ENCODE measurements at regions of chr6 and their contacts with region 1.

Region 1: GRCh38 chr6:150238336-150238741 is 95.5 kb downstream of the PPP1R14C start:
- DNase-seq: no peak
- H3K4me3 Mint-ChIP-seq: no peak overlapping the region
- H3K27ac Mint-ChIP-seq: no peak overlapping the region
- H3K4me1 Mint-ChIP-seq: peaks cover 15% of the 10 kb centered on the region
- H3K27me3 Mint-ChIP-seq: peaks cover 10% of the 10 kb centered on the region

Region 2: DNA sequence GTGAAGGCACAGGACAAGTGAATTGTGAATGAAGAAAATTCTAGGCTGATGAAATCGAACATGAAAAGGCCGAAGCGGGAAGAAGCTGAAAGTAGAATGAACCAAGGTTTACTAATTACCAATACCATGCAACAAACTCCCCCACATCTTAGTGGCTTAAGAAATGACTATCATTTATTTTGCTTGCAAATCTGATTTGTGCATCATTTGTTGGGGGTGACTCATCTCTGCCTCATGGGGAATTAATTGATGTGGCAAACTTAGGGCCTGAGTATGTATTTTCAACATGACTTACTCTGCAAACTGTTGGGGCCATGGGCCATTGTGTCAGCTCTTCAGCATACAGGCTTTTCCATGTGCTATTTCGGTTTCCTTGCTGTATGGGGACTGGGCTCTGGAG is 68.7 kb before region 1 on chr6:
- intact Hi-C with region 1: loop called (anchors 1 kb)
- DNase-seq: no peak
- H3K4me3 Mint-ChIP-seq: no peak overlapping the region
- H3K27ac Mint-ChIP-seq: peak overlapping the region; percentile 13
- H3K4me1 Mint-ChIP-seq: peaks cover 9% of the 10 kb centered on the region
- H3K27me3 Mint-ChIP-seq: peaks cover 12% of the 10 kb centered on the region

Region 3: GRCh38 chr6:150195996-150196417 is 42.3 kb before region 1 on chr6:
- intact Hi-C with region 1: no loop called
- DNase-seq: no peak
- H3K4me3 Mint-ChIP-seq: no peak overlapping the region
- H3K27ac Mint-ChIP-seq: no peak overlapping the region
- H3K4me1 Mint-ChIP-seq: no peaks in the 10 kb centered on the region
- H3K27me3 Mint-ChIP-seq: peaks cover 11% of the 10 kb centered on the region

Region 4: DNA sequence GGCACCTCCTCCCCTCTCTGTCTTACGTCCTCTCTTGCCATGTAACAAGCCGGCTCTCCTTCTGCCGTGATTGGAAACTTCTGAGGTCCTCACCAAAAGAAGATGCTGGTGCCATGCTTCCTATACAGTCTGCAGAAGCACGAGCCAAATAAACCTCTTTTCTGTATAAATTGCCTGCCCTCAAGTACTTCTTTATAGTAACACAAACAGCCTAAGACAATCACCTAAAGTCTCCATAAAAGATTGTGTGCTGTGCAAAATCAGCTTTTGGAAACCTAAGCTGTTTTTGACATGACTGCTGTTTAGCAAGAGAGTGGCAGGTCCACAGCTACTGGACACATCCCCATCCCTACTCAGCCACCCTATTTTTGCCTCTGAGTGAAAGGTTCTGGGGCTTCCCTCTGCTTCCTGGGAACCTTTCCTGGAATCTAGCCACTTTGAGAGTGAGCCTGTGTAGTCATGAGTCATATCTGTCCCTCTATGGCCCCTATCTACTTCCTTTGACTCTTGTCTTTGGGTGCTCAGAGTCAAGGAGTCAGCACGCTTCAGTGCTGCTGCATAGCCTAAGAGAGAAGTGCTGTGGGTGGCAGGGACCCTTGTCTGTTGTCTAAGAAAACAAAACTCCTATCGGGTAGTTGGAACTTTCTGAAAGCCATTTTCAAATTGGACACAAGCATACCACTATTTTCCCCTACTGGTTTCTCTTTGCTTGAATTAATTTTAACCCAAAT is 14.5 kb after region 1 on chr6:
- intact Hi-C with region 1: loop called (anchors 1 kb)
- DNase-seq: no peak
- H3K4me3 Mint-ChIP-seq: no peak overlapping the region
- H3K27ac Mint-ChIP-seq: no peak overlapping the region
- H3K4me1 Mint-ChIP-seq: peaks cover 31% of the 10 kb centered on the region
- H3K27me3 Mint-ChIP-seq: peaks cover 2% of the 10 kb centered on the region

Region 5: DNA sequence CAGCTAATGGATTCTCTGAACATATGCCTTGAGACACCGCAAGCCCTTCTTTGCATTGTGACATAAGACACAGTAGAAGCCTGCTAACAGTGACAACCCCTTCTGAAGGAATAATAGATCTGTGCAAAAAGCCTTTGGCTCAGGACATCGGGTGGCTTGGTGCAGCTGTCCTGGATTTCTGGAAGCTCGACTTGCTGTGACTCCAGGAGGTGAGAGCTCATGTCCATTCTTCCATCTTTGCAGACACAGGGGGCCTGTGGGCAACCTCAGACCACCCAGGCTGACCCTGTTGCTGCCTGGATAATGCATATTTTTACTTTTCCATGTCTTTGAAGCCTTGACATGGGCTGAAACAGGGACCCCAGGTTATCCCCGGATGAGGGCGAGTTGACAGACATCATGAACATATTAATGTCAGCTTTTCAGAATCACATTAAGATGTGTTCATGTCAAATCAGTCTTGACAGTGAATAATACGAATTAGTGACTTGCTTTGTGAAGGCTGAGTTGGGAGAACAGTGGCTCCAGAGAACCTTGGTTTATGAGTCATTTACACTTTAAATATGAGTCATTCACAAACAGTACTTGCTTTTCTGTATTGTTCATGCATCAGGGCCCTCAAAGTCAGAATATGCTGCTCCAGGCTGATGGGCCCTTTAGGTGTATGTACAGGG is 63.6 kb after region 1 on chr6:
- intact Hi-C with region 1: loop called (anchors 1 kb)
- DNase-seq: no peak
- H3K4me3 Mint-ChIP-seq: no peak overlapping the region
- H3K27ac Mint-ChIP-seq: no peak overlapping the region
- H3K4me1 Mint-ChIP-seq: peaks cover 6% of the 10 kb centered on the region
- H3K27me3 Mint-ChIP-seq: peaks cover 5% of the 10 kb centered on the region